Activated CD8-positive, alpha-beta T cell treated with anti-CD3 and anti-CD28 coated beads for 36 hours (primary cell): ENCODE measurements at regions of chr6 and their contacts with region 1.

Region 1: GRCh38 chr6:181049-181654 is 111.1 kb upstream of the DUSP22 start:
- DNase-seq: no peak
- ATAC-seq: no peak
- H3K4me3 Mint-ChIP-seq: peak overlapping the region; percentile 58
- H3K27ac Mint-ChIP-seq: no peak overlapping the region
- H3K4me1 Mint-ChIP-seq: peaks cover 29% of the 10 kb centered on the region
- H3K27me3 Mint-ChIP-seq: peaks cover 8% of the 10 kb centered on the region
- CTCF ChIP-seq: no peak

Region 2: GRCh38 chr6:152431-152830 is 28.7 kb before region 1 on chr6:
- CTCF ChIA-PET with region 1: interaction called, 11 read pairs
- POLR2A ChIA-PET with region 1: interaction called, 3 read pairs
- intact Hi-C with region 1: no loop called
- DNase-seq: no peak
- ATAC-seq: no peak
- H3K4me3 Mint-ChIP-seq: no peak overlapping the region
- H3K27ac Mint-ChIP-seq: no peak overlapping the region
- H3K4me1 Mint-ChIP-seq: peaks cover 27% of the 10 kb centered on the region
- H3K27me3 Mint-ChIP-seq: peaks cover 36% of the 10 kb centered on the region
- CTCF ChIP-seq: no peak

Region 3: GRCh38 chr6:168865-169455 is 12.2 kb before region 1 on chr6:
- CTCF ChIA-PET with region 1: interaction called, 15 read pairs
- POLR2A ChIA-PET with region 1: interaction called, 4 read pairs
- intact Hi-C with region 1: no loop called
- DNase-seq: no peak
- ATAC-seq: no peak
- H3K4me3 Mint-ChIP-seq: no peak overlapping the region
- H3K27ac Mint-ChIP-seq: no peak overlapping the region
- H3K4me1 Mint-ChIP-seq: peaks cover 4% of the 10 kb centered on the region
- H3K27me3 Mint-ChIP-seq: peaks cover 4% of the 10 kb centered on the region
- CTCF ChIP-seq: peak; percentile 76